B cell (primary cell): ENCODE measurements at regions of chr7 and their contacts with region 1.

Region 1: DNA sequence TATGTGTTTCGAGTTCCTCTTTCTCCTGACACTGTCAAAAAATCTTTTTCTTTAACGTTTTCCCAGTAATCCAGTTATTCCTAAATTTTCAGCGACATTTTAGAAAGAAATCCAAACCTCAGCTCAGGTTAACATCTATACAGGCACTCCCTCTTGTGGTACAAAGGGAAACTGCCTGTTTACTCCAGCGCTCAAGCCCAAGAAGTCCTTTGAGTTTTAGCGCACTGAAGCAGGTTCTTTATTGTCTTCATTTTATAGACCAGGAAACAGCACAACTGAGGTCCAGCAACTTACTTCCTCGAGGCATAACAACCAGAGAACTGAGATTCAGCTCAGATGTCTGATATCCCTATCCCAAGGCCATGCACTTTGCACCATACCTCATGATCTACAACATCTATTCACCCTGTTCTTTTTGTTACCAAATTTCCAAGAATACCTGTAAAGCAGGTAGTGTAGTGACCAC is 287.2 kb upstream of the MKLN1 start:
- DNase-seq: peak; percentile 79
- ATAC-seq: peak; percentile 77
- H3K4me3 ChIP-seq: no peak overlapping the region
- H3K4me3 Mint-ChIP-seq: peak overlapping the region; percentile 44
- H3K27ac ChIP-seq: peak overlapping the region in 1 of 2 donors; percentile 6
- H3K27ac Mint-ChIP-seq: peak overlapping the region; percentile 55
- H3K4me1 ChIP-seq: peaks cover 5 to 23% of the 10 kb centered on the region in 2 donors
- H3K4me1 Mint-ChIP-seq: peaks cover 54% of the 10 kb centered on the region
- H3K27me3 ChIP-seq: no peaks in the 10 kb centered on the region
- H3K27me3 Mint-ChIP-seq: no peaks in the 10 kb centered on the region
- CTCF ChIP-seq: peak; percentile 98

Region 2: GRCh38 chr7:130961128-130961601 is 79.3 kb before region 1 on chr7:
- CTCF ChIA-PET with region 1: interaction called, 11 read pairs
- POLR2A ChIA-PET with region 1: no interaction called
- intact Hi-C with region 1: no loop called
- DNase-seq: peak; percentile 78
- ATAC-seq: peak; percentile 34
- H3K4me3 ChIP-seq: peak overlapping the region in 4 of 5 experiments; percentile 24 to 61 (median 38)
- H3K4me3 Mint-ChIP-seq: peak overlapping the region; percentile 90
- H3K27ac ChIP-seq: peak overlapping the region; percentile 66 to 81
- H3K27ac Mint-ChIP-seq: peak overlapping the region; percentile 94
- H3K4me1 ChIP-seq: peaks cover 62% of the 10 kb centered on the region in 2 donors
- H3K4me1 Mint-ChIP-seq: peaks cover 68% of the 10 kb centered on the region
- H3K27me3 ChIP-seq: no peaks in the 10 kb centered on the region
- H3K27me3 Mint-ChIP-seq: no peaks in the 10 kb centered on the region
- CTCF ChIP-seq: no peak

Region 3: DNA sequence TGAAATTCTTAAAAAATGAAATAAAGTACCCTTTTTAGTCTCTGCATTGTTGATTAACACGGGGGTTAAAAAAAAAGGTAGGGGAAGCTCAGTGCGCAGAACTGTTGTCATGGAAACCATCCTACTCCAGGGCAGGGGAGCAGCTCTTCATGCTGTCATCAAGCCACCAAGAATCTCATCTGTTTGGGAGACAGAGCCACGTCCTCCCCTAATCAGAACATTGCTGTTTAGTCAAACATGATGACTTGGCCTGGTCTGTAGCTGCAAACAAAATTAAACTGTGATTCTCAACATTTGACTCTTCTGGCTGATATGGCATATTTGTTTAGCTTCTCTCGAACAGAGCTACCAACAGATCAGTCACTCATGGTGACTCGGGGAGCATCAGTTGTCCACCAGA is 52.1 kb before region 1 on chr7:
- CTCF ChIA-PET with region 1: interaction called, 93 read pairs
- POLR2A ChIA-PET with region 1: no interaction called
- intact Hi-C with region 1: no loop called
- DNase-seq: peak; percentile 52
- ATAC-seq: no peak
- H3K4me3 ChIP-seq: no peak overlapping the region
- H3K4me3 Mint-ChIP-seq: peak overlapping the region; percentile 5
- H3K27ac ChIP-seq: peak overlapping the region in 1 of 2 donors; percentile 67
- H3K27ac Mint-ChIP-seq: peak overlapping the region; percentile 47
- H3K4me1 ChIP-seq: peaks cover 22% of the 10 kb centered on the region in 2 donors
- H3K4me1 Mint-ChIP-seq: peaks cover 67% of the 10 kb centered on the region
- H3K27me3 ChIP-seq: no peaks in the 10 kb centered on the region
- H3K27me3 Mint-ChIP-seq: no peaks in the 10 kb centered on the region
- CTCF ChIP-seq: no peak

Region 4: DNA sequence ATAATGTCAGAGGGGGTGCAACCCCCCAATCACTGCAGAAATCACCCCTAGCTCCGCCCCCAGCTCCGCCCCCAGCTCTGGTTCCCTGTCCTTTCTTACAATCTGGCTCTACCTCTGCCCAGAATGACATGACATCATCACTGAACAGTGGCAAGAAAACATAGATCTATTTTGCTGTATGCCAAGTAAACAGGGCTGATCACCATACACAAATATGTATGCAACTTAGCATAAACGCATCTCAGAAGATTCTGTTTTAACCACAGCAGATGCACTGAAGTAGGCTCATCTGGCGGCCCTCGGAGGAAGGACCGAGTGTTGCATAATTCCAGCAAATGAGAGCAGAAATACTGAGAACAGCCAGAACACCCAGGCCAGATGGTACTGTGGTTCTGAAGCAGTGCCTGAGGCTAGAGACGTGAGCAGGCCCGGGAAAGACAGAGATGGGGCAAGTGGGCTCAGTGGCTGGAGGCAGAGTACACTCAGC is 13.2 kb before region 1 on chr7:
- CTCF ChIA-PET with region 1: interaction called, 19 read pairs
- POLR2A ChIA-PET with region 1: interaction called, 7 read pairs
- intact Hi-C with region 1: no loop called
- DNase-seq: peak; percentile 60
- ATAC-seq: peak; percentile 14
- H3K4me3 ChIP-seq: no peak overlapping the region
- H3K4me3 Mint-ChIP-seq: peak overlapping the region; percentile 38
- H3K27ac ChIP-seq: peak overlapping the region; percentile 68 to 93
- H3K27ac Mint-ChIP-seq: peak overlapping the region; percentile 83
- H3K4me1 ChIP-seq: peaks cover 75 to 87% of the 10 kb centered on the region in 2 donors
- H3K4me1 Mint-ChIP-seq: peaks cover 85% of the 10 kb centered on the region
- H3K27me3 ChIP-seq: no peaks in the 10 kb centered on the region
- H3K27me3 Mint-ChIP-seq: no peaks in the 10 kb centered on the region
- CTCF ChIP-seq: no peak

Region 5: GRCh38 chr7:131071786-131072504 is 31.4 kb after region 1 on chr7:
- CTCF ChIA-PET with region 1: interaction called, 16 read pairs
- POLR2A ChIA-PET with region 1: no interaction called
- intact Hi-C with region 1: no loop called
- DNase-seq: no peak
- ATAC-seq: no peak
- H3K4me3 ChIP-seq: no peak overlapping the region
- H3K4me3 Mint-ChIP-seq: no peak overlapping the region
- H3K27ac ChIP-seq: no peak overlapping the region
- H3K27ac Mint-ChIP-seq: no peak overlapping the region
- H3K4me1 ChIP-seq: peaks cover 38 to 48% of the 10 kb centered on the region in 2 donors
- H3K4me1 Mint-ChIP-seq: peaks cover 78% of the 10 kb centered on the region
- H3K27me3 ChIP-seq: no peaks in the 10 kb centered on the region
- H3K27me3 Mint-ChIP-seq: no peaks in the 10 kb centered on the region
- CTCF ChIP-seq: peak; percentile 65

Region 6: GRCh38 chr7:131346885-131347592 is 306.5 kb after region 1 on chr7:
- CTCF ChIA-PET with region 1: no interaction called
- POLR2A ChIA-PET with region 1: no interaction called
- intact Hi-C with region 1: no loop called
- DNase-seq: no peak
- ATAC-seq: no peak
- H3K4me3 ChIP-seq: no peak overlapping the region
- H3K4me3 Mint-ChIP-seq: no peak overlapping the region
- H3K27ac ChIP-seq: no peak overlapping the region
- H3K27ac Mint-ChIP-seq: no peak overlapping the region
- H3K4me1 ChIP-seq: peaks cover 0 to 8% of the 10 kb centered on the region in 2 donors
- H3K4me1 Mint-ChIP-seq: peaks cover 44% of the 10 kb centered on the region
- H3K27me3 ChIP-seq: no peaks in the 10 kb centered on the region
- H3K27me3 Mint-ChIP-seq: no peaks in the 10 kb centered on the region
- CTCF ChIP-seq: no peak